ENCODE measurements at regions of chr9 and their contacts with region 1.

Region 1: GRCh38 chr9:135718616-135719015 is 16.6 kb downstream of the KCNT1 start:
- DNase-seq: no peak
- H3K4me3 ChIP-seq: no peak overlapping the region
- CTCF ChIP-seq: no peak

Region 2: GRCh38 chr9:135103001-135103446 is 615.6 kb before region 1 on chr9:
- in situ Hi-C with region 1: no loop called
- DNase-seq: no peak
- H3K4me3 ChIP-seq: no peak overlapping the region
- CTCF ChIP-seq: no peak

Region 3: GRCh38 chr9:135500525-135501358 is 217.9 kb before region 1 on chr9 and contains the start of gene MRPS2:
- in situ Hi-C with region 1: loop called (anchors 10 kb)
- DNase-seq: peak; percentile 53
- H3K4me3 ChIP-seq: peak within 1 kb of the TSS; percentile 87
- CTCF ChIP-seq: peak; percentile 87

Region 4: GRCh38 chr9:135677641-135678168 is 40.9 kb before region 1 on chr9:
- in situ Hi-C with region 1: loop called (anchors 5 kb)
- DNase-seq: no peak
- H3K4me3 ChIP-seq: no peak overlapping the region
- CTCF ChIP-seq: no peak

Region 5: DNA sequence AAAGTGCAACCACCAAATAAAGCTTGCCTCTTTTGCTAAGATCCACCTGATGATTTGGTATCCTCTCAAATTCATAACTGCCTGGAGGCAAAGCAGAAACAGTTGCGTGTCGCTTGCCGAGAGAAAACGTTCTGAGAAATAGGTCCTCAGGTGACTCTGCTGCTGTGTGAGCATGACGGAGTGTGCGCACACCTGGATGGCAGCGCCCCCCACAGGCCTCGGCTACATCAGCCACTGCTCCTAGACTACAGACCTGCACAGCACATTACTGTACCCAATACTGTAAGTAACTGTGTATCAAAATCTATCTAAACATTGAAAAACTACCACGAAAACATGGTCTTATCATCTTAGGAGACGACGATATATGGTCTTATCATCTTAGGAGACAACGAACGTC is 101.3 kb after region 1 on chr9:
- in situ Hi-C with region 1: no loop called
- DNase-seq: no peak
- H3K4me3 ChIP-seq: no peak overlapping the region
- CTCF ChIP-seq: no peak

Region 6: DNA sequence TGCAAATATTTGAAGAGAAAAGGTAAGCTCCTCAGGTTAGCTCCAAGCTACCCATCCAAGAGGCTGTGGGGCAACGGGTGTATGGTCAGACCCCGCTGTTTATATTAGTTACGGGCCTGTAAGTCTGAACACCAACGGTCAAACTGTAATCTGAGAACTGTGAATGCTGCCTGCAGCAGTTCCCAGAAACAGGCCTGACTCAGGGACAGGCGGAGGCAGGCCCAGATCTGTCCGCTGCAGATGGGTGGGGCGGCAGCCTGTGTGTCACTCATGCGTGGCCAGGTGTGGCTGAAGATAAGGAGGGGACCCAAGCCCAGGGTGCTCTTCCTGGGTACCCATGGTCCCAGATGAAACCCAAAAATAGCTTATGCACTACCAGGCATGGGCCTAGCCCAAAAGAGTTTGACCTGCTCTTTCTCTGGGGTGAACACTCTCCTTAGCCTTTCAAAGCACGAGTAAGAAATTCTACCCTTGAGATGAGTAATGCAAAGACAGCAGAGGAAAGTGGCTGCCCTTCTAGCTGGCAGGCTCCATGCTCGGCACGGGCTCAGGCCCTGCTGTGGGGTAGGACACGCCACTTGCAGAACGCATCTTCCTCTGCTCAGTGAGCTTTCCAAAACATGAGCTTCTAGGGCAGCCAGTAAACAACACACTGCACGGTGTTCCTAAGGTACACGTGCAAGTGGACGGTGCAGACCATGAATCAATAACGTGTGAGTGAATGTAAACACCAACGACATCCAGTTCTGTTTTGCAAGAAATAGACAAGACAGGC is 233.5 kb after region 1 on chr9:
- in situ Hi-C with region 1: loop called (anchors 10 kb)
- DNase-seq: peak; percentile 32
- H3K4me3 ChIP-seq: no peak overlapping the region
- CTCF ChIP-seq: no peak